ENCODE measurements at regions of chr1 and their contacts with region 1.

Region 1: DNA sequence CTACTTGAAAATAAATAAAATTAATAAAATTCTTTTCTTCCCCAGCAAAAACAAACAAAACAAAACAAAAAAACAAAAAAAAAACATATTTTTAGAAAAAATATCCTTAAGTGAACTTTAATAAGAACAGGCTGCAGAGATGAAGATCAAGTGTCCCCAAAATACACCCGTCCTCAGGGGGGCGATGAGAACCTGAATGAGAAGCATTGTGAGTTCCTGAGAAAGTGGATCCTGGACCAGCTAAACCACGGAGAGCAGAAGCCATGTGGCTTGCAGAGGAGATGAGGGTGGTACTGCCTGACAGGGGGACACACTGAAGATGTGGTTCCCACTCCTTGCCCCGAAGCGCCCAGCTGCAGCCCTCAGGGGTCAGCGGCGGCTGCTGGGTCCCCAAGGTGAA is 89.3 kb downstream of the ITPKB start:
- DNase-seq: peak; percentile 59
- ATAC-seq: no peak
- H3K4me3 Mint-ChIP-seq: no peak overlapping the region
- H3K27ac Mint-ChIP-seq: peak overlapping the region; percentile 61
- H3K4me1 Mint-ChIP-seq: peaks cover 55% of the 10 kb centered on the region
- H3K27me3 Mint-ChIP-seq: no peaks in the 10 kb centered on the region

Region 2: GRCh38 chr1:226662642-226663326 is 13.0 kb after region 1 on chr1:
- CTCF ChIA-PET with region 1: interaction called, 13 read pairs
- DNase-seq: peak; percentile 96
- ATAC-seq: peak; percentile 94
- H3K4me3 Mint-ChIP-seq: peak overlapping the region; percentile 42
- H3K27ac Mint-ChIP-seq: peak overlapping the region; percentile 84
- H3K4me1 Mint-ChIP-seq: peaks cover 86% of the 10 kb centered on the region
- H3K27me3 Mint-ChIP-seq: no peaks in the 10 kb centered on the region